Heart right ventricle (tissue), 16 donors: ENCODE measurements at regions of chr11 and their contacts with region 1.

Region 1: GRCh38 chr11:126989942-126990715 is 10.4 kb downstream of the KIRREL3 start:
- DNase-seq: peak; percentile 65 to 68
- ATAC-seq: peak; percentile 73 to 88 (median 84)
- H3K4me3 ChIP-seq: no peak overlapping the region
- H3K27ac ChIP-seq: no peak overlapping the region
- H3K4me1 ChIP-seq: no peaks in the 10 kb centered on the region
- H3K27me3 ChIP-seq: peaks cover 5 to 77% (median 33%) of the 10 kb centered on the region in 7 donors
- CTCF ChIP-seq: peak; percentile 77 to 94 (median 91)

Region 2: GRCh38 chr11:126440792-126441514 is 549.2 kb before region 1 on chr11:
- intact Hi-C with region 1: loop called (anchors 2 to 5 kb)
- DNase-seq: peak; percentile 73 to 80
- ATAC-seq: peak; percentile 29 to 77 (median 72)
- H3K4me3 ChIP-seq: no peak overlapping the region
- H3K27ac ChIP-seq: no peak overlapping the region
- H3K4me1 ChIP-seq: peaks cover 4 to 32% (median 16%) of the 10 kb centered on the region in 9 donors
- H3K27me3 ChIP-seq: peaks cover 0 to 8% (median 0%) of the 10 kb centered on the region in 7 donors
- CTCF ChIP-seq: peak; percentile 81 to 98 (median 96)

Region 3: GRCh38 chr11:126607374-126607773 is 382.8 kb before region 1 on chr11:
- intact Hi-C with region 1: loop called in 7 of 10 experiments (anchors 5 to 10 kb)
- DNase-seq: peak; percentile 11 to 31
- ATAC-seq: peak in 7 of 8 donors; percentile 40 to 85 (median 70)
- H3K4me3 ChIP-seq: no peak overlapping the region
- H3K27ac ChIP-seq: no peak overlapping the region
- H3K4me1 ChIP-seq: no peaks in the 10 kb centered on the region
- H3K27me3 ChIP-seq: peaks cover 0 to 67% (median 56%) of the 10 kb centered on the region in 7 donors
- CTCF ChIP-seq: peak in 8 of 9 donors; percentile 47 to 70 (median 64)

Region 4: GRCh38 chr11:126716456-126717083 is 273.6 kb before region 1 on chr11:
- intact Hi-C with region 1: loop called in 7 of 10 experiments (anchors 5 to 10 kb)
- DNase-seq: peak in 1 of 2 donors; percentile 17
- ATAC-seq: no peak
- H3K4me3 ChIP-seq: no peak overlapping the region
- H3K27ac ChIP-seq: no peak overlapping the region
- H3K4me1 ChIP-seq: peaks cover 0 to 6% (median 0%) of the 10 kb centered on the region in 9 donors
- H3K27me3 ChIP-seq: peaks cover 0 to 54% (median 26%) of the 10 kb centered on the region in 7 donors
- CTCF ChIP-seq: peak in 7 of 9 donors; percentile 33 to 59 (median 43)